ENCODE measurements at regions of chr10 and their contacts with region 1.

Region 1: GRCh38 chr10:7666253-7667081 is at the start of gene ITIH5:
- DNase-seq: peak; percentile 74
- H3K4me3 ChIP-seq: peak within 1 kb of the TSS; percentile 67 to 97 (median 83)
- H3K27ac ChIP-seq: peak within 1 kb of the TSS; percentile 67 to 94 (median 88)
- H3K4me1 ChIP-seq: peaks cover 0 to 45% (median 38%) of the 10 kb centered on the region in 4 donors
- H3K27me3 ChIP-seq: no peaks in the 10 kb centered on the region
- CTCF ChIP-seq: no peak
- EP300 ChIP-seq: no peak
- POLR2A ChIP-seq: peak; percentile 28 to 57
- total RNA-seq, gene ITIH5: 48.2 to 126 (median 108) TPM

Region 2: GRCh38 chr10:6320320-6321010 is 1346.0 kb before region 1 on chr10:
- intact Hi-C with region 1: no loop called
- DNase-seq: no peak
- H3K4me3 ChIP-seq: no peak overlapping the region
- H3K27ac ChIP-seq: no peak overlapping the region
- H3K4me1 ChIP-seq: no peaks in the 10 kb centered on the region
- H3K27me3 ChIP-seq: no peaks in the 10 kb centered on the region
- CTCF ChIP-seq: no peak
- EP300 ChIP-seq: no peak
- POLR2A ChIP-seq: no peak

Region 3: GRCh38 chr10:7525314-7526016 is 141.0 kb before region 1 on chr10:
- intact Hi-C with region 1: loop called (anchors 5 kb)
- DNase-seq: peak; percentile 80
- H3K4me3 ChIP-seq: no peak overlapping the region
- H3K27ac ChIP-seq: no peak overlapping the region
- H3K4me1 ChIP-seq: peaks cover 0 to 4% (median 0%) of the 10 kb centered on the region in 4 donors
- H3K27me3 ChIP-seq: peaks cover 0 to 8% (median 0%) of the 10 kb centered on the region in 3 donors
- CTCF ChIP-seq: peak; percentile 82 to 91 (median 86)
- EP300 ChIP-seq: no peak
- POLR2A ChIP-seq: no peak

Region 4: GRCh38 chr10:7541137-7542095 is 125.1 kb before region 1 on chr10:
- intact Hi-C with region 1: loop called (anchors 5 kb)
- DNase-seq: peak; percentile 89
- H3K4me3 ChIP-seq: peak overlapping the region in 1 of 4 donors; percentile 1
- H3K27ac ChIP-seq: peak overlapping the region; percentile 77 to 87 (median 85)
- H3K4me1 ChIP-seq: peaks cover 0 to 48% (median 32%) of the 10 kb centered on the region in 4 donors
- H3K27me3 ChIP-seq: no peaks in the 10 kb centered on the region
- CTCF ChIP-seq: no peak
- EP300 ChIP-seq: peak in 1 of 4 donors; percentile 53
- POLR2A ChIP-seq: no peak

Region 5: DNA sequence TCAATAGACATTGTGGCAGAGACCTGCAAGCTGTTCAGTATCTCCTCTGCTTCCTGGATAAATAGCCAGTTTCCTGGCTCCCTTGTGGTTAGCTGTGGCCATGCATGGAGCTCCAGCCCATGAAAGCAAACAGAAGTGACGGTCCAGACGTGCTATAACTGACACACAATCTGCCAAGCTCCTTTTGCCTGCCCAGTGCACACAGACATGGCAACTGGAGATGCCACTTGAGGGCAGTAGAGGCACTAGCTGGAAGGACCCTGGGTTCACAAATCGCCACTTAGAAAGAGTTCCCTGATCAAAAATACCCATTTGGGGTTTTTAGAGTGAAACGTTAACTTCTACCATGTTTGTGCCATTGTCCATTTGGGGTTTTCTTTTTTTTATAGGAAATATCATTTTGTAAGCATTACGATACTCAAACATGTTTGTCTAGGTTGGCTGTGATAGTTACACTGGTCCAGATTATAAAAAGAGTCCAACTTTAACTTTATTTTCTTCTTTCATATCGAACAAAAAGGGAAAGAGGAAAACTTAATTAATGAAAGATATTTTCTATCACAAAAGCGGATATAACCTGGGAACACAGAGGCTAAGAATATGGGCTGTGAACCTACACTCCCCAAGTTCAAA is 90.0 kb after region 1 on chr10:
- intact Hi-C with region 1: no loop called
- DNase-seq: no peak
- H3K4me3 ChIP-seq: no peak overlapping the region
- H3K27ac ChIP-seq: no peak overlapping the region
- H3K4me1 ChIP-seq: no peaks in the 10 kb centered on the region
- H3K27me3 ChIP-seq: no peaks in the 10 kb centered on the region
- CTCF ChIP-seq: no peak
- EP300 ChIP-seq: no peak
- POLR2A ChIP-seq: no peak

Region 6: DNA sequence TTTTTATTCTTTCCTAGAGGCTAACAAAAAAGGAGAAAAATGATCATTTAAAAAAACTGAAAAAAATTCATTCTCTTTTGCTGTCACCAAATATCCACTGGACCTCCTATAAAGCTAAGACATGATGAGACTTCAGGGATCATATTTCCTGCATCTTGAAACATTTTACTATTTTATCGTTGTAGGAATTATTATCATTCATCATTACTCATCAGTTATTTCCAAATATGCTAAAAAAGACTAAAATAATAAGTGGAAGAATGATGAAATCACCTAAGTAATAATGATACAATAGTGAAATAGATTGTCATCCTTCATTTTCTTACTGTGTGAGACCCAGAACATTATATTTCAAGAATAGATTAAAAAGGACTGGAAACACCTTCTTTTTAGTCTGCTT is 180.1 kb after region 1 on chr10:
- intact Hi-C with region 1: no loop called
- DNase-seq: no peak
- H3K4me3 ChIP-seq: no peak overlapping the region
- H3K27ac ChIP-seq: no peak overlapping the region
- H3K4me1 ChIP-seq: no peaks in the 10 kb centered on the region
- H3K27me3 ChIP-seq: no peaks in the 10 kb centered on the region
- CTCF ChIP-seq: no peak
- EP300 ChIP-seq: no peak
- POLR2A ChIP-seq: no peak